MCF 10A (cell line): ENCODE measurements at regions of chr1 and their contacts with region 1.

Region 1: DNA sequence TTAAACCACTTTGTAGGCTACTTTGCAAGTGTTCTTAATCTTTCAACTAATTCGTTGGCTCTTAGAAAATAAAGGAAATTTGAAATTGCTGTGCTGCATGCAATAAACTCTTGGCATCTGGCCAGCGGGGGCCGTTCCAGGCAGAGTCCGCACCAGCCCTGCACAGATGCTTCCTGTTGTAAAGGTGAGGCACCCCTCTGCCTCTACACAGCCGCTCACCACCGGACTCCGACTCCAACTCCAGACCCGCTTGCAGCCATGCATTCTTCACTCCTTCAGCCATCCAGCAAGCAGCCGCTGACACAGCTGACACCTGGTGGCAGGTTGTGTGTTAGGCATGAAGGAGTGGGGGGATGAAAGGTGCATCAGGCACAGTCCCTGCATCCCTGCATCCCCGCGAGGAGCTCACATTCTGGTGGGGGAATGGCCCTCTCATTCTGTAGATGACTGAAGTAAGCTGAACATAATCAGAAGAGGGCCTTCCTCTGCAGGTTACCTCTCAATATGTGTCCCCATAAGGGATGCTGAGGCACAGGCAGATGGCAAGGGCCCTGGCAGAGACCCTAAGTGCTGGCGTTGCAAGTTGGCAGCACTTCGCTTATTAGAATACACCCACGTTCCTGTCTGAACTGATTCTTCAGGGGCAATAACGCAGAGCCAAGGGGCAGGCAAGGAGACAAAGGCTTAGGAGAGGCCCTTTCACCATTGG is 56.8 kb downstream of the GLIS1 start:
- DNase-seq: peak; percentile 59
- H3K4me3 Mint-ChIP-seq: no peak overlapping the region
- H3K27ac Mint-ChIP-seq: no peak overlapping the region
- H3K4me1 Mint-ChIP-seq: peaks cover 4% of the 10 kb centered on the region
- H3K27me3 Mint-ChIP-seq: peaks cover 52% of the 10 kb centered on the region
- CTCF ChIP-seq: peak; percentile 59

Region 2: GRCh38 chr1:53450225-53450624 is 231.9 kb before region 1 on chr1:
- CTCF ChIA-PET with region 1: interaction called, 15 read pairs
- POLR2A ChIA-PET with region 1: no interaction called
- intact Hi-C with region 1: no loop called
- DNase-seq: peak; percentile 17
- H3K4me3 Mint-ChIP-seq: no peak overlapping the region
- H3K27ac Mint-ChIP-seq: no peak overlapping the region
- H3K4me1 Mint-ChIP-seq: no peaks in the 10 kb centered on the region
- H3K27me3 Mint-ChIP-seq: peaks cover 30% of the 10 kb centered on the region
- CTCF ChIP-seq: no peak

Region 3: GRCh38 chr1:53485478-53486394 is 196.4 kb before region 1 on chr1:
- CTCF ChIA-PET with region 1: interaction called, 66 read pairs
- POLR2A ChIA-PET with region 1: no interaction called
- intact Hi-C with region 1: loop called (anchors 1 kb)
- DNase-seq: peak; percentile 79
- H3K4me3 Mint-ChIP-seq: no peak overlapping the region
- H3K27ac Mint-ChIP-seq: no peak overlapping the region
- H3K4me1 Mint-ChIP-seq: no peaks in the 10 kb centered on the region
- H3K27me3 Mint-ChIP-seq: peaks cover 49% of the 10 kb centered on the region
- CTCF ChIP-seq: peak; percentile 85

Region 4: DNA sequence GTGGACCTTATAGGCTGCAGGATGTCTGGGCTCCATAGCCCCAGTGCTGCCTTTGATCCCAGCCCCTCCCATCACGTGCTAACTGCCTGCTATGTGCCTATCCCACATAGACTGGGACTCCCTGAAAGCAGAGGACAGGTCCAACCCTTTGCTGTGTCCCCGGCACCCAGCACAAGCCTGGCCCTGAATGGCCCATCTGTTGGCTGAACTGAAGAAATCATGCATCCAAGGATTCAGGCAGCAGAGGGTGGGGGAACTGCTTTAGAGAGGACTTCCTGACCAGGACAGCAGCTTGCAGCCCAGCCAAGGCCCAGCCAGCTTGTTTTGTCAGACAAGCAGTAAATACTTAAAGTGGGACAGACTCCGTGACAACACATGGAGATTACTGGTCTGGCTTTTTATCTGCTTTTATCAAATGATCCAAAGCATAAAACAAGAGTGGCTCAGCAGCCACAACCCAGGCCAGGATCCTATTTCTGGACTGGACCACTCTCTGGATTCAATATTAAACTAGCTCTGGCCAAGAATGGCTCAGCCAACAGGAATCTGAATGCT is 12.4 kb before region 1 on chr1:
- CTCF ChIA-PET with region 1: interaction called, 10 read pairs
- POLR2A ChIA-PET with region 1: no interaction called
- intact Hi-C with region 1: no loop called
- DNase-seq: no peak
- H3K4me3 Mint-ChIP-seq: no peak overlapping the region
- H3K27ac Mint-ChIP-seq: no peak overlapping the region
- H3K4me1 Mint-ChIP-seq: no peaks in the 10 kb centered on the region
- H3K27me3 Mint-ChIP-seq: peaks cover 15% of the 10 kb centered on the region
- CTCF ChIP-seq: no peak

Region 5: DNA sequence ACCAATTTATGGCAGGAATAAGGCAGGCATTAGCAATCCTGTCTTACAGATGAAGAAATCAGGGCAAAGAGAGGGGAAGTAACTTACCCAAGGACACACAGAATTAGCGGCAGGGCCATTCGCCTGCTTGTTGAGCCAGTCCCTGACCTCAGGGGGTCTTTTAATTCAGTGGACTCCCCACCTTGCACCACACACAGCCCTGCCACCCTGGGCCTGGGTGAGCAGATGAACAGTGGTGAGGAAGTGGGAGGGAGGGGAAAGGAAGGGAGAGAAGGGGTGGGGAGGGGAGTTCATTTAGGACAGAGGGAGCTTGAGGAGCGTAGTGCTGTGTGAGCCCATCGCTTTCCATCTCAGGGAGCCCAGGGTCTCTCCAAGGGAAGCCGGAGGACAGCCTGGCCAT is 22.2 kb after region 1 on chr1:
- CTCF ChIA-PET with region 1: no interaction called
- POLR2A ChIA-PET with region 1: no interaction called
- intact Hi-C with region 1: no loop called
- DNase-seq: no peak
- H3K4me3 Mint-ChIP-seq: no peak overlapping the region
- H3K27ac Mint-ChIP-seq: no peak overlapping the region
- H3K4me1 Mint-ChIP-seq: no peaks in the 10 kb centered on the region
- H3K27me3 Mint-ChIP-seq: no peaks in the 10 kb centered on the region
- CTCF ChIP-seq: no peak